B cell (primary cell): ENCODE measurements at regions of chr6 and their contacts with region 1.

Region 1: DNA sequence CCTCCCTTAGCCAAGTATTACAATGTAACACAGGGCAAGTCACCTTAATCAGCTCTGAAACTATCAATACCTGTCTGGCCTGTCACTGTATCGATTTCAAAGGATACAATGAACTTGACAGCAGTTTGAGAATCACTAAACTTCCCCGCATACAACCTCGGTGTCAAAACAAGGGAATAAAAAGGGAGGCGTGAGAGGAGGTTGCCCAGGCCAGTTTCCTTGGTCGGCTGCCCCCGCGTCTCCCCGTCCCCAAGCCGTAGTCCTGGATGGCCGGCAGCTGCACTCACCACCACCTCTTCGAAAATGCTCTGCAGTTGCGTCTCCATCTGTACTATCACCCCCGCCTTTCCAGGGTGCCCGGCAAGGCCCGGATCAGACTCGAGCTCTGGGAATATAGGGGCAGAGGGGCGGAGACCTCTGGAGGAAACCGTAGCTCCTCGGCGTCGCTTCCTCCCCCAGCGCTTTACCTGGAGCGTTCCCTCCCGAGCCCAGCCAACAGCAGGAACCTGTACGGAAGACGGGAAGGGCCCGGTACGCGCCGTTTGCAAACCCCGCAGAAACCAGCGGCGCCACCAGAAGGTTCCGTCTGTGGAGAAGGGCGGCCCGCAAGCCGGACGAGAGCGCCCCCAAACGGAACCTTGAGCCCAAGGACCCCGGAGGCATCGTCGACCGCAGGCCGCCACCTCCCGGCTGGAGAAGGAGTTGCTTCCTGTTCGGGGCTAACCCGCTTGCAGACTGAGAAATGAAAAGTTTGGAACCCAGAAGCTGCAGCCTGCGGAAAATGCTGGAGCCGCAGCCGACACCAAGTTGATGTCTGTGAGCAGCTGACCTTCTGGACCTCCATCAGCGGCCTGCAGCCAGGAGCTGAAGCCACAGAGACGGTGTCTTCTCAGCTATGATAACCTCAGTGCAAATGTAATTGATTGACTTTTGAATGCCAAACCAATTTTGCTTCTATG is at the start of gene MED23:
- DNase-seq: peak; percentile 97
- ATAC-seq: peak; percentile 97
- H3K4me3 ChIP-seq: peak within 1 kb of the TSS; percentile 82 to 95 (median 87)
- H3K4me3 Mint-ChIP-seq: peak within 1 kb of the TSS; percentile 98
- H3K27ac ChIP-seq: peak within 1 kb of the TSS; percentile 58 to 71
- H3K27ac Mint-ChIP-seq: peak within 1 kb of the TSS; percentile 94
- H3K4me1 ChIP-seq: peaks cover 9 to 11% of the 10 kb centered on the region in 2 donors
- H3K4me1 Mint-ChIP-seq: peaks cover 25% of the 10 kb centered on the region
- H3K27me3 ChIP-seq: no peaks in the 10 kb centered on the region
- H3K27me3 Mint-ChIP-seq: peaks cover under 1% of the 10 kb centered on the region
- CTCF ChIP-seq: peak; percentile 97
- total RNA-seq, gene MED23: 55.4 and 57.1 TPM in 2 replicates

Region 2: DNA sequence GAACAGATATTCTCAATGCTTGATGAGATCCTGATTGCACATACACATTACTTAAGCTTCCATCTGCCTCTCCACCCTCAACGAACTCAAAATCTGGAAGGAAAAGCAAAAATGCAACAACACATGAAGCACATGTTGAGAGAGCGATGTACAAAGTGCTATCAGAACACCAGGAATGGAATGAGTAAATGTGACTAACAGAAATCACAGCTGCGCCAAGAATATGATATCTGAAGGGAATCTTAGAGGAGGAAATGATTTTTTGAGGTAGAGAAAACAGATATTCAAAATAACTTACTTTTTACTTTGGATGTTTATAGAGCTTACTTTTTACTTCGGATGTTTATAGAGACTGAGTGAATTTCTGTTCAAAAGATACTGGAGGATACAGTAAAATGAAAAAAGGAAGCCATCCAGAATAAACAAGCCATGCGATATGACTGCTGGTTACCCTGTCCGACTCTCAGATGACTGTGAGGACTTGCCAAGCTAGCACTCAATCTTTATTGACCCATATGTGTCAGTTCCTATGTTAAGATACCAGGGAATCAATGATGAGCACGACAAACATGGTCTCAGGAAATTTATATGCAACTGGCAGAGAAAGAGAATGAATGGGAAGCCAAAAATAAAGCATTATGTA is 698.8 kb before region 1 on chr6:
- CTCF ChIA-PET with region 1: no interaction called
- POLR2A ChIA-PET with region 1: no interaction called
- intact Hi-C with region 1: no loop called
- DNase-seq: no peak
- ATAC-seq: no peak
- H3K4me3 ChIP-seq: no peak overlapping the region
- H3K4me3 Mint-ChIP-seq: no peak overlapping the region
- H3K27ac ChIP-seq: no peak overlapping the region
- H3K27ac Mint-ChIP-seq: no peak overlapping the region
- H3K4me1 ChIP-seq: no peaks in the 10 kb centered on the region
- H3K4me1 Mint-ChIP-seq: no peaks in the 10 kb centered on the region
- H3K27me3 ChIP-seq: no peaks in the 10 kb centered on the region
- H3K27me3 Mint-ChIP-seq: no peaks in the 10 kb centered on the region
- CTCF ChIP-seq: no peak

Region 3: DNA sequence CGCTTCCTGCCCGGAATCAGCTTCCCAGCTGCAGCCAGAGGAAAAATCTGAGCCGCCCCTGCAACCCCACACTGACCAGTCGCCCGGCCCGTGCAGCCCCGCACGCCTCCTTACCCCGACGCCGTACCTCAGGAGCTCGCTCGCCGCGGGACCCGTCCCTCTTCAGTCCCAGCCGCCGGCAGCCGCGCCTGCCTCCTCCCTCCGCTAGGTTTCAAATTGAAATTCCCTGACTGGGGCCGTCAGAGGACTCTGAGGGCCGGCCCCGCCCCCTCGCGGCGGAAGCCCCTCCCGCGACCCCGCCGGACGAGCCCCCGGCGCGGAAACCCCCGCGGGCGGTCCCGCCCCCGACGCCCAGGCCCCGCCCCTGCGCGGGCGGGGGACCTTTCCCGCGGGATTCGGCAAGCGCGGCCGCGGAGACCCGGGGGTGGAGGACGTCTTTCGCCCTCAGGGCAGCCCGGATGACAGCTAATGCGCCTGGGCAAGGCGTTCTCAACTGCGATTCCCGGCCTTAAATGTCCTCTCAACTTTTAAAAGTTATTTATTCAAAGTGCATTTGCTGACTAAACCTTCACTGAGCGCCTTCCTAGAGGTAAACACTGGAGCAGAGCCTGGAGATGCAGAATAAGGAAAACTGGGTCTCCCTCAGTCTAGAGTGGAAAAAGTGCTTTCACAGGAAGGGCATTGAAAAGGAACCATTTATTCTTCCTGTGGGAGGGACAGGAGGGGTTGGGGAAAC is 564.8 kb before region 1 on chr6 and contains the start of gene EPB41L2:
- CTCF ChIA-PET with region 1: no interaction called
- POLR2A ChIA-PET with region 1: no interaction called
- intact Hi-C with region 1: loop called (anchors 1 kb)
- DNase-seq: peak; percentile 93
- ATAC-seq: peak; percentile 89
- H3K4me3 ChIP-seq: peak within 1 kb of the TSS; percentile 73 to 94 (median 90)
- H3K4me3 Mint-ChIP-seq: peak within 1 kb of the TSS; percentile 92
- H3K27ac ChIP-seq: peak within 1 kb of the TSS; percentile 72 to 78
- H3K27ac Mint-ChIP-seq: peak within 1 kb of the TSS; percentile 81
- H3K4me1 ChIP-seq: peaks cover 27 to 32% of the 10 kb centered on the region in 2 donors
- H3K4me1 Mint-ChIP-seq: peaks cover 33% of the 10 kb centered on the region
- H3K27me3 ChIP-seq: no peaks in the 10 kb centered on the region
- H3K27me3 Mint-ChIP-seq: no peaks in the 10 kb centered on the region
- CTCF ChIP-seq: peak; percentile 31
- total RNA-seq, gene EPB41L2: 59.8 and 61.0 TPM in 2 replicates

Region 4: GRCh38 chr6:131107151-131107550 is 520.9 kb before region 1 on chr6:
- CTCF ChIA-PET with region 1: no interaction called
- POLR2A ChIA-PET with region 1: no interaction called
- intact Hi-C with region 1: no loop called
- DNase-seq: no peak
- ATAC-seq: no peak
- H3K4me3 ChIP-seq: no peak overlapping the region
- H3K4me3 Mint-ChIP-seq: no peak overlapping the region
- H3K27ac ChIP-seq: no peak overlapping the region
- H3K27ac Mint-ChIP-seq: no peak overlapping the region
- H3K4me1 ChIP-seq: peaks cover 17% of the 10 kb centered on the region in 2 donors
- H3K4me1 Mint-ChIP-seq: peaks cover 22% of the 10 kb centered on the region
- H3K27me3 ChIP-seq: no peaks in the 10 kb centered on the region
- H3K27me3 Mint-ChIP-seq: no peaks in the 10 kb centered on the region
- CTCF ChIP-seq: no peak

Region 5: DNA sequence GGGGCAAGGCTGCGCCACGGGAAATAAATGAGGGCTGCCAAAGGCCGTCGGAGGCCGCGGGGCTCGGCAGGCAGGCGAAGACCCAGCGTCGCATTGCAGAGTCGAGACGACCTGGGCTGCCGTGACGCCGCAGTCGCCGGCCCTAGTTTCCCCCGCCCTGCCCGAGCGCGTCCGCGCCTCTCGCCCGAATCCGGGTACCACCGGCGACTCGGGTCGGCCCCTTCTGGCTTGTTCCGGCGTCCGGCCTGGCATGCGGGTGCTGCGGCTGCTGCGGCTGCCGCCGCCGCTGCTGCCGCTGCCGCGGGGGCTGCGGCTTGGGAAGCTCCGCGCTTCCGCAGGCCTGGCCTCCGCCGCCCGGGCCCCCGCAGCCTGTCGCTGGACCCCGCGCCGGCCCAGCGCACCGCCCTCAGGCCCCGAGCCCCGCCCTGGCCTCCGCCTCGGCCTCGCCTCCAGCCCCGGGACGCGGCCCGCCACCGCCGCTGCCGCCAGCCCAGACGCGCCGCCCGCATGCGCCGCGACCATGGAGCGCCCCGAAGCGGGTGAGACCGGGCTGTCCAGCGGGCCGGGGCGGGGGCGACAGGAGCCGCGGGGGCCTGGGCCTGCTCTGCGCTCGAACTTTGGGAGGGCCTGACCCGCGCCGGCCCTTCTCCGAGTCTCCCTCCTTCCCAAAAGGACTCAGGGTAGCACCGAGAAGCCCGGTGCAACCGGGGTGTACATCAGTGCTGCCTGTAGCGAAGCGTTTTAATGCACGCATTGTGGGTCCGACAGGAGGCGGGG is 492.6 kb before region 1 on chr6 and contains the start of gene AKAP7:
- CTCF ChIA-PET with region 1: interaction called, 4 read pairs
- POLR2A ChIA-PET with region 1: no interaction called
- intact Hi-C with region 1: loop called (anchors 5 kb)
- DNase-seq: peak; percentile 78
- ATAC-seq: peak; percentile 77
- H3K4me3 ChIP-seq: peak within 1 kb of the TSS; percentile 55 to 82 (median 76)
- H3K4me3 Mint-ChIP-seq: peak within 1 kb of the TSS; percentile 95
- H3K27ac ChIP-seq: peak within 1 kb of the TSS; percentile 66 to 78
- H3K27ac Mint-ChIP-seq: peak within 1 kb of the TSS; percentile 93
- H3K4me1 ChIP-seq: peaks cover 9 to 13% of the 10 kb centered on the region in 2 donors
- H3K4me1 Mint-ChIP-seq: peaks cover 23% of the 10 kb centered on the region
- H3K27me3 ChIP-seq: no peaks in the 10 kb centered on the region
- H3K27me3 Mint-ChIP-seq: no peaks in the 10 kb centered on the region
- CTCF ChIP-seq: no peak
- total RNA-seq, gene AKAP7: 8.3 and 10.8 TPM in 2 replicates

Region 6: DNA sequence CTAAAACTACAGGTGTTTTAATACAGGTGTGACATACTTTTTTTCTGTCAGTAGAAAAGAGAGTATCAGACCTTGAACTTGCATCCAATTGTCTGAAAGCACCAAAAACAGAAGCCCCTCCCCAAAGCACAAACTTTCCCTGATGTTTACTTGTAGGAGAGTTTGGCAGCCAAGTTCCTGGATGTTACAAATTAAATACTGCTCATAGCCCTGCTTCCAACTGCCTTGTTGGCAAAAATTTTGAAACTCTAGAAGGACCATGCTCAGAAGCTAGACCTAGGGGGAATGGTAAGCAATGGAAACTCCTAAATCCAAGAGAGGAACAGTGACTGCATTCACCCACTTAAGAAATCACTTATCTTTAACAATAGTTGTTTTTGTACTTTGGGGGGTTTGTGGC is 72.0 kb before region 1 on chr6:
- CTCF ChIA-PET with region 1: no interaction called
- POLR2A ChIA-PET with region 1: no interaction called
- intact Hi-C with region 1: no loop called
- DNase-seq: no peak
- ATAC-seq: no peak
- H3K4me3 ChIP-seq: no peak overlapping the region
- H3K4me3 Mint-ChIP-seq: no peak overlapping the region
- H3K27ac ChIP-seq: no peak overlapping the region
- H3K27ac Mint-ChIP-seq: no peak overlapping the region
- H3K4me1 ChIP-seq: no peaks in the 10 kb centered on the region
- H3K4me1 Mint-ChIP-seq: no peaks in the 10 kb centered on the region
- H3K27me3 ChIP-seq: no peaks in the 10 kb centered on the region
- H3K27me3 Mint-ChIP-seq: no peaks in the 10 kb centered on the region
- CTCF ChIP-seq: no peak

Region 7: DNA sequence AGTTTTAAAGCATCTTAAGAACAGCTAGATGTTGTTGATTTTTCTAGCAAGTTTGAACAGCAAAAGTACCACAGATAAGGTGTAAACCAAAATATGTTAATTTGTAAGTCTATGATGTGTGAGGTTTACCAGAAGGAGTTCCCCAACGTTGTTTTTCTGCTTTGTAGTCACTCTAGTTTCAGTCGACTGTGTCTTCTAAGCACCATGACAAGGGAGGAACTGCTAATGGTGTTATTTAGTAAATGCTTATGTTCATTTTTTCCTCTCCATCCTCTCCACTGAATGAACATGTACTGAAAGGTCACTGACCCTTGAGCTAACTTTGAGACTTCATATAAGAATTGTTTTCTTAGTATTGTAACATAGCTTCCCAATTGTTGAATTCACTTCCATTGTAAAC is 12.1 kb after region 1 on chr6:
- CTCF ChIA-PET with region 1: interaction called, 15 read pairs
- POLR2A ChIA-PET with region 1: interaction called, 3 read pairs
- intact Hi-C with region 1: no loop called
- DNase-seq: peak; percentile 15
- ATAC-seq: peak; percentile 34
- H3K4me3 ChIP-seq: no peak overlapping the region
- H3K4me3 Mint-ChIP-seq: no peak overlapping the region
- H3K27ac ChIP-seq: no peak overlapping the region
- H3K27ac Mint-ChIP-seq: no peak overlapping the region
- H3K4me1 ChIP-seq: peaks cover 9 to 19% of the 10 kb centered on the region in 2 donors
- H3K4me1 Mint-ChIP-seq: peaks cover 13% of the 10 kb centered on the region
- H3K27me3 ChIP-seq: no peaks in the 10 kb centered on the region
- H3K27me3 Mint-ChIP-seq: peaks cover 14% of the 10 kb centered on the region
- CTCF ChIP-seq: no peak

Region 8: GRCh38 chr6:131683479-131683878 is 55.5 kb after region 1 on chr6:
- CTCF ChIA-PET with region 1: interaction called, 11 read pairs
- POLR2A ChIA-PET with region 1: no interaction called
- intact Hi-C with region 1: loop called (anchors 2 kb)
- DNase-seq: peak; percentile 78
- ATAC-seq: peak; percentile 75
- H3K4me3 ChIP-seq: peak overlapping the region in 1 of 5 experiments; percentile 29
- H3K4me3 Mint-ChIP-seq: peak overlapping the region; percentile 69
- H3K27ac ChIP-seq: peak overlapping the region in 1 of 2 donors; percentile 48
- H3K27ac Mint-ChIP-seq: peak overlapping the region; percentile 44
- H3K4me1 ChIP-seq: peaks cover 48 to 59% of the 10 kb centered on the region in 2 donors
- H3K4me1 Mint-ChIP-seq: peaks cover 51% of the 10 kb centered on the region
- H3K27me3 ChIP-seq: no peaks in the 10 kb centered on the region
- H3K27me3 Mint-ChIP-seq: peaks cover 2% of the 10 kb centered on the region
- CTCF ChIP-seq: no peak

Region 9: DNA sequence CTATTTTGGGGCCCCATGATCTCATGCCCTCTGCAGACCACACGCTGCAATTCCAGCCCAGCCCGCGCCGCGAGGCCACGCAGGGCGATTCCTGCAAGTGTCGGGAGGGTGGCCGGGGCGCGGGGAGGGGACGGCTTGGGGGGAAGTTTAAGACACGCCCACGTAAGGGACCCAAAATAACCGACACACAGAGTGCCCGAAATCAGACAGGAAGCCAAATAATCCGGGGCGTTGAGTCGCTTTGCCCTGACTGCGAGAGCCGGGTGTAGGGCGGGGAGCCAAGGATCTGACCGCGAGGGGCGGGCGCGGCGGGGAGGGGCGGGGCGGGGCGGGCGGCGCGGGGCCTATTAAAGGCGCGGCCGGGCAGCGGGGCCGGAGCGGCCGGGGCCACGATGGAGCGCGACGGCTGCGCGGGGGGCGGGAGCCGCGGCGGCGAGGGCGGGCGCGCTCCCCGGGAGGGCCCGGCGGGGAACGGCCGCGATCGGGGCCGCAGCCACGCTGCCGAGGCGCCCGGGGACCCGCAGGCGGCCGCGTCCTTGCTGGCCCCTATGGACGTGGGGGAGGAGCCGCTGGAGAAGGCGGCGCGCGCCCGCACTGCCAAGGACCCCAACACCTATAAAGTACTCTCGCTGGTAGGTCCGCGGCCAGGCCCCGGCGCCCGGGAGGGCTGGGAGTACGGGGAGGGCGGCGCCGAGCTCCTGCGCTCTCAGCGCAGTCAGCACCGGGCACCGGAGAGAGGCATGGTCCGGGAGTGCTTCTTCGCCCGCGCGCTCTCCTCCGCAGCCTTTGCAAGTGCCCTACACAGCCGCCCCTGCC is 179.8 kb after region 1 on chr6 and contains the start of gene ENPP1:
- CTCF ChIA-PET with region 1: interaction called, 3 read pairs
- POLR2A ChIA-PET with region 1: no interaction called
- intact Hi-C with region 1: loop called (anchors 10 kb)
- DNase-seq: peak; percentile 67
- ATAC-seq: peak; percentile 76
- H3K4me3 ChIP-seq: peak within 1 kb of the TSS; percentile 42 to 74 (median 57)
- H3K4me3 Mint-ChIP-seq: peak within 1 kb of the TSS; percentile 98
- H3K27ac ChIP-seq: no peak within 1 kb of the TSS
- H3K27ac Mint-ChIP-seq: peak within 1 kb of the TSS; percentile 43
- H3K4me1 ChIP-seq: peaks cover 16 to 17% of the 10 kb centered on the region in 2 donors
- H3K4me1 Mint-ChIP-seq: peaks cover 19% of the 10 kb centered on the region
- H3K27me3 ChIP-seq: peaks cover 0 to 18% (median 9%) of the 10 kb centered on the region in 4 experiments
- H3K27me3 Mint-ChIP-seq: peaks cover 15% of the 10 kb centered on the region
- CTCF ChIP-seq: no peak
- total RNA-seq, gene ENPP1: 0.07 and 0.42 TPM in 2 replicates